ENCODE measurements at regions of chr16 and their contacts with region 1.

Region 1: GRCh38 chr16:71985262-71985974 is 14.8 kb downstream of the PKD1L3 start:
- DNase-seq: no peak
- H3K4me3 ChIP-seq: no peak overlapping the region
- H3K27ac ChIP-seq: no peak overlapping the region
- H3K4me1 ChIP-seq: no peaks in the 10 kb centered on the region
- H3K27me3 ChIP-seq: no peaks in the 10 kb centered on the region
- CTCF ChIP-seq: no peak

Region 2: GRCh38 chr16:71937868-71938510 is 47.4 kb before region 1 on chr16:
- CTCF ChIA-PET with region 1: no interaction called
- POLR2A ChIA-PET with region 1: interaction called, 12 read pairs
- intact Hi-C with region 1: no loop called
- DNase-seq: no peak
- H3K4me3 ChIP-seq: no peak overlapping the region
- H3K27ac ChIP-seq: no peak overlapping the region
- H3K4me1 ChIP-seq: no peaks in the 10 kb centered on the region
- H3K27me3 ChIP-seq: no peaks in the 10 kb centered on the region
- CTCF ChIP-seq: no peak